ENCODE measurements at regions of chr1 and their contacts with region 1.

Region 1: DNA sequence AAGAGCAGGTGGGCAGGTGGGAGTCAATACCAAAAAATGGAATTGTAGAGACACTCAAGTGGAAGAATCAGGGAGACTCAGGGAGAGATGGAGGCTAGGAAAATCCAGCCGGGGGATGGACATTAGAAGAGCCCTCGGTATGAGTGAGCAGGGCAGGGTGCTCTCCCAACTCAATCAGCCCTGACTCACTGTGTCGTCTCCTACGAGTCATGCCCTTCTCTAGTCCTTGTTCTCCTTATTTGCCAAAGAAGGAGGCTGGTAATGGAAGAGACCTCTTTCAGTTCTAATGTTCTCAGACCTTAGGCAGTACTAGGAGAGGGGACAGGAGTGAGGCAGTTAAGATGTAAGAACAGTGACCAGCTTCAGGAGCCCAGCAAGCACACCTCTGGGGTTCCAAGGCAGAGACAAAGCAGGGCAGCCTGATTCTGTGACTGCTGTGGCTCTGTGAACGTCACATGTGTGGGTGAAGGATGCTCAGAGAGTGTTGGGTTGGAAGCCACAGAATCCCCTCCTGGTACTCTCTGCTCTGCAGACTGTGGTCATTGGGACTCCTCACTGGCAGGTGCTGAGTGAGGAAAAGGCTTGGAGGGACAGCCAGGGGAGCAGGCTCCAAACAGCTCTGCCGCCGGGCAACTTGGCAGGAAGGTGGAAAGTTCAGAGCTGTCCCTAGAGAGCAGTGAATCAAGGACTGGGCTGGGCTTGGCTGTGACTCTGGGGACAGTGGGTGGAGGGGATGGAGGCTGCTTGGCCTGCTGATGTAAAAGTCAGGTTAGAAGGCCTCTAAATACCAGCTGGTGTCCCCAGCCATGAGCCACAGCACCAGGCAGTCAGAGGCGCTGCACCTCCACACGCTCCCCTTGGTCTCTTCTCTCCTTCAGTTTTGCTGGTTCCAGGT is 11.1 kb upstream of the GJA5 start:
- DNase-seq: peak; percentile 51 to 91
- H3K4me3 ChIP-seq: peak overlapping the region; percentile 44 to 56
- H3K27ac ChIP-seq: peak overlapping the region; percentile 91 to 94
- H3K4me1 ChIP-seq: peaks cover 26 to 51% of the 10 kb centered on the region in 2 donors
- H3K27me3 ChIP-seq: no peaks in the 10 kb centered on the region
- CTCF ChIP-seq: no peak

Region 2: DNA sequence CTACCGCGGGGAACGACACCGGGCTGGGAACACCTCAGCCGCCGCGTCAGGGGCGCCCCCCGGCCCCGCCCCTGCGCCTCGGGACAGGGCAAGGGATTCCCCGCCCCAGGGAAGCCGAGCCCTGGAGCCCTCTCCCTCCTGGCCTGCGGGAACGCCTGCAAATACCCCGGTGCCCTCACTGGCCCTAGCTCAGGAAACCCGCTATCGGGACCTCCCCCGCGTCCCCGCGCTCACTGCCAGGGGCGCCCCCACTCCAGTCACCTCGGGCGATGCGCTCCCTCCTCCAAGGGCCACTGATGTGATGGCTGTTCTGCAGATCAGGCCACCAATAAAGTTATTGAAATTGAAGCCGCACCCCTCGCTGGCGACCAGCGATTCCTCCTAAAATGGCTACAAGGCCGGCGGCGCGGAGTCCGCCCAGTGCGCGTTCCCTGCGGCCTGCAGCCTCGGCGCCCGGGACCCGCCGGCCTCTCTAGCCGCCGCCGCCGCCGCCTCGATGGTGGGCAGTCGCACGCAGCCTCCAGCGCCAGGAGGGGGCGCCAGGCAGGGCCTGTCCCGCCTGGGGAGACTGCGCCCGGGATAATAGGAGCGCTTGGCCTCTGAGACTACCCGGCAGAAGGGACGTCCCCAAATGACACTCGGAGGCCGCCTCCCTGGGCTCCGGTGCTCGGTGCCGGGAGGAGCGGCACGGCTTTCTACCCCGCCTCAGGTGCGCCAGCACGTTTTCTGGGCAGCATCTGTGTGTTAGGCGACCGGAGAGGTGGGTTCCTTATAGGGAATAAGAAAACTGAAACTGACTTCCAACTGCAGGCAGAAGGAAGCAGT is 599.1 kb before region 1 on chr1 and contains the start of gene PRKAB2:
- intact Hi-C with region 1: loop called (anchors 5 kb)
- DNase-seq: peak; percentile 85 to 98
- H3K4me3 ChIP-seq: peak within 1 kb of the TSS; percentile 76 to 88
- H3K27ac ChIP-seq: peak within 1 kb of the TSS; percentile 89 to 93
- H3K4me1 ChIP-seq: peaks cover 3 to 13% of the 10 kb centered on the region in 2 donors
- H3K27me3 ChIP-seq: no peaks in the 10 kb centered on the region
- CTCF ChIP-seq: peak; percentile 73 to 97 (median 89)
- total RNA-seq, gene PRKAB2: 15.4 TPM

Region 3: GRCh38 chr1:147599362-147600118 is 171.9 kb before region 1 on chr1:
- intact Hi-C with region 1: loop called (anchors 5 kb)
- DNase-seq: peak; percentile 83 to 98
- H3K4me3 ChIP-seq: peak overlapping the region; percentile 88 to 90
- H3K27ac ChIP-seq: peak overlapping the region; percentile 91 to 92
- H3K4me1 ChIP-seq: peaks cover 0 to 15% of the 10 kb centered on the region in 2 donors
- H3K27me3 ChIP-seq: no peaks in the 10 kb centered on the region
- CTCF ChIP-seq: no peak

Region 4: DNA sequence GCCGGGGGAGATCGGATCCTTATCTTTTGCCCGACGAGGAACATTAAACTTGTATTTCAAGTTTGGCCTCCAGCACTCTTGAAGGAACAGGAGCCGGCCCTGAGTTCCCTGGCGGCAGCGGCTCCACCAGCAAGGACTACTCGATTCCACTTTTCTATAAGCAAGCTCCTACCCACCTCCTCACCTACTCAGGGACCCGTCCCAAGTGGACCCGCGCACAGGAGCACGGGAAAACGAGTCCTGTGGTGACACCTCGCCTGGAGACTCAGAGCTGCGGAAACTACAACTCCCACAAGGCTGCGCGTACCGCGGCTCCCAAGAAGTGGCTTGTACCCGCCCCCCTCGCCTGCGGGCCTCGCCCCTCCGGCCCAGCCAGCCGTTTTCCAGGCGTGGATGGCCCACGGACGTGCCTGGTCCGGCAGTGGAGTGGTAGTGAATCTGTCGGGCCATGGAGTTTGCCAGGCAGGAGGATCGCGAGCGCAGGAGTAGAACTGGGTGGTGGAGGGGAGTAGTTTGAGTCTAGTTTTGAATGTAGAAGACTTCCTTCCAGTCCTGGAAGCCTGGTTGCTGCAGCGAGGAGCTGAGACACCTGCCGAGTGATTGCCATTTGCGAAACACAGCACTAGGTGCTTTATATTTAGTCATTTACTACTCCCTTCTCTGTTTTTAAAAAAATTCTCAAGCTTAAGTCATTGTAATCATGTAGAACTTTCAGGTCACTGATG is 101.0 kb before region 1 on chr1 and contains the start of gene ACP6:
- intact Hi-C with region 1: loop called (anchors 2 kb)
- DNase-seq: peak; percentile 80 to 97
- H3K4me3 ChIP-seq: peak within 1 kb of the TSS; percentile 71 to 79
- H3K27ac ChIP-seq: peak within 1 kb of the TSS; percentile 57 to 78
- H3K4me1 ChIP-seq: no peaks in the 10 kb centered on the region
- H3K27me3 ChIP-seq: no peaks in the 10 kb centered on the region
- CTCF ChIP-seq: no peak
- total RNA-seq, gene ACP6: 7.5 TPM

Region 5: GRCh38 chr1:147754661-147755060 is 16.8 kb before region 1 on chr1:
- intact Hi-C with region 1: loop called (anchors 2 kb)
- DNase-seq: no peak
- H3K4me3 ChIP-seq: no peak overlapping the region
- H3K27ac ChIP-seq: no peak overlapping the region
- H3K4me1 ChIP-seq: peaks cover 2 to 17% of the 10 kb centered on the region in 2 donors
- H3K27me3 ChIP-seq: no peaks in the 10 kb centered on the region
- CTCF ChIP-seq: no peak

Measured in ascending aorta (tissue), 2 donors.